IMR-90 (cell line): ENCODE measurements at regions of chr19 and their contacts with region 1.

Region 1: GRCh38 chr19:40055832-40056504 is at the start of gene ZNF780B:
- DNase-seq: peak; percentile 47
- ATAC-seq: peak; percentile 98
- H3K4me3 ChIP-seq: peak within 1 kb of the TSS; percentile 77
- H3K27ac ChIP-seq: peak within 1 kb of the TSS; percentile 75
- H3K4me1 ChIP-seq: no peaks in the 10 kb centered on the region
- H3K27me3 ChIP-seq: no peaks in the 10 kb centered on the region
- CTCF ChIP-seq: no peak; the same call in 1 of the 2 replicates
- POLR2A ChIP-seq: no peak
- RAD21 ChIP-seq: no peak
- total RNA-seq, gene ZNF780B: 14.7 and 19.9 TPM in 2 replicates

Region 2: GRCh38 chr19:40090241-40091204 is 34.6 kb after region 1 on chr19 and contains the start of gene ZNF780A:
- CTCF ChIA-PET with region 1: no interaction called
- POLR2A ChIA-PET with region 1: no interaction called
- dilution Hi-C with region 1: no loop called
- in situ Hi-C with region 1: no loop called
- intact Hi-C with region 1: loop called (anchors 2 kb)
- DNase-seq: peak; percentile 47
- ATAC-seq: peak; percentile 97
- H3K4me3 ChIP-seq: peak within 1 kb of the TSS; percentile 91
- H3K27ac ChIP-seq: peak within 1 kb of the TSS; percentile 86
- H3K4me1 ChIP-seq: no peaks in the 10 kb centered on the region
- H3K27me3 ChIP-seq: no peaks in the 10 kb centered on the region
- CTCF ChIP-seq: no peak
- POLR2A ChIP-seq: 0 out of 2 replicates have a peak, but pooled peaks have one; percentile 43
- RAD21 ChIP-seq: no peak
- total RNA-seq, gene ZNF780A: 17.0 and 25.3 TPM in 2 replicates

Region 3: DNA sequence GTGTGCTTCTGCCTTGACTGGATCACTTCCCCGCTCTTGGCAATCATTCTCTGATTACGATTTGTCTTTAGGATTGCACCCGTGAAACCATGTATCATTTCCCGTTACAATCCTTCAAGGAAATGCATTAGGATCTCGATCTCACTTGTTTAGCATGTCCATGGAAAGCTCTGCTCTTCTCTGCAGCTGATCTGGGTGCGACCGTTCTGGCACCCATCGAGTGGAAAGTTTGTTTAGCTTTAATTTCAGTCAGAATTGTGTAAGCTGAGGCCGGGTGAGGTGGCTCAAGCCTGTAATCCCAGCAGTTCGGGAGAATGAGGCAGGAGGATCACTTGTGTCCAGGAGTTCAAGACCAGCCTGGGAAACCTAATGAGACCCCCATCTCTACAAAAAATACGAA is 603.6 kb after region 1 on chr19:
- CTCF ChIA-PET with region 1: no interaction called
- POLR2A ChIA-PET with region 1: no interaction called
- dilution Hi-C with region 1: no loop called
- in situ Hi-C with region 1: no loop called
- intact Hi-C with region 1: no loop called
- DNase-seq: no peak
- ATAC-seq: no peak
- H3K4me3 ChIP-seq: no peak overlapping the region
- H3K27ac ChIP-seq: no peak overlapping the region
- H3K4me1 ChIP-seq: peaks cover 6% of the 10 kb centered on the region
- H3K27me3 ChIP-seq: no peaks in the 10 kb centered on the region
- CTCF ChIP-seq: no peak
- POLR2A ChIP-seq: no peak
- RAD21 ChIP-seq: no peak